Activated naive CD4-positive, alpha-beta T cell treated with anti-CD3 and anti-CD28 coated beads for 36 hours (primary cell): ENCODE measurements at regions of chr2 and their contacts with region 1.

Region 1: GRCh38 chr2:160381425-160381951 is 112.1 kb downstream of the RBMS1 start:
- DNase-seq: no peak
- H3K4me3 Mint-ChIP-seq: no peak overlapping the region
- H3K27ac Mint-ChIP-seq: peak overlapping the region; percentile 33
- H3K4me1 Mint-ChIP-seq: peaks cover 69% of the 10 kb centered on the region
- H3K27me3 Mint-ChIP-seq: no peaks in the 10 kb centered on the region

Region 2: DNA sequence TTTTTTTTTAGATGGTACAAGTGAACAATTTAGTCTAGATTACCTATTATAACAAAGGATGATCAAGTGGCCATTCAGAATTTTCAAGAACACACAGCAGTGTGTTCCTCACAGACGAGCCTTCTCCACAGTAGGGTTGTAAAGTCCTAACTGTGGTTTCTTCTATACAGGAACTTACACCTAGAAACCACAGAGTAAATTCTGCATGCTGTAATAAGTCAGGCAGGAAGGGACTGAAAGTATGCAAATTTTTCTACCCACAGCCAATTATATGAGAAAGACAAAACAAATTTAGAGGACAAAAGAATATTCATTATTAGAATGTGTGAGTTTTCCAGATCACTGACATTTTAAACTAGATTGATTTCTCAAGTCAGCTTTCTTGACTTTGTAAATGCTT is 12.7 kb after region 1 on chr2:
- CTCF ChIA-PET with region 1: interaction called, 5 read pairs
- intact Hi-C with region 1: loop called (anchors 1 kb)
- DNase-seq: no peak
- H3K4me3 Mint-ChIP-seq: peak overlapping the region; percentile 26
- H3K27ac Mint-ChIP-seq: peak overlapping the region; percentile 83
- H3K4me1 Mint-ChIP-seq: peaks cover 60% of the 10 kb centered on the region
- H3K27me3 Mint-ChIP-seq: no peaks in the 10 kb centered on the region